WTC11 (cell line): ENCODE measurements at regions of chr7 and their contacts with region 1.

Region 1: DNA sequence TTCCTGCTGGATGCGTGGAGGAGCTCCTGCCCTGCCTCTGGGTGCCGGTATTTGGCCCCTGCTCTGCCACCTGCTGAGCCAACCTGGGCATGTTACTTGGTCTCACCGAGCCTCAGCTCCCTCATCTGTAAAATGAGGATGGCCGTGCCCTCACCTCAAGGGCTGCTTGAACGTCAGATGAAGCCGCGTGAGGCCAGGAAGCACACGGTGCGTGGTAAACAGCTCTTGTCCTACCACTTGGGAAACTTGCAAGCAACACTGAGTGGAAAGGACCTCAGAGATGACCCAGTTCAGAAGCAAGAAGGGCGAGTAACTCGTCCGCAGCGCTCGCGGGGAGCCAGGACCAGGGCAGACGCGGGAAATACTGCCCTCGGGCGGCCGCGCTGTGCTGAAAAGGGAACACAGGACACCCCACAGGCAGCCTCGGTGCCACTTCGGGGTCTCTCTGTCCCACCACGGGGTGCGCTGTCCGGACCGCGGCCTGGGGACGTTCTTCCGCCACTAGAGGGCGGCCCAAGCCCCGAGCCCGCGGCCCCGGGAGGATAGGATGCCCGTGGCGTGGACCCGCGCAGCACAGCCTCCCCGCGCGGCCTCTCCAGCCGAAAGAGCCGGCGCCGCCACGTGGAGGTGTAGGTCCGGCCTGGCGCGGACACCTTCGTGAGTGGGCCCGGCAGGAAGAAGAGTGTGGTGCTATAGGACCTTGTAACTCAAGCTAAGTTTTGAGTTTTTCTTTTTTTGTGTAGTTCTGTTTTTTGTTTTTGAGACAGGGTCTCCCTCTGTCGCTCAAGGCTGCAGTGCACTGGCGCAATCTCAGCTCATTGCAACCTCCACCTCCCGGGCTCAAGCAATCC is 94.1 kb downstream of the PRKAG2 start:
- DNase-seq: peak; percentile 89
- ATAC-seq: peak; percentile 97
- H3K4me3 Mint-ChIP-seq: peak overlapping the region; percentile 61
- H3K27ac Mint-ChIP-seq: no peak overlapping the region
- H3K4me1 Mint-ChIP-seq: no peaks in the 10 kb centered on the region
- H3K27me3 Mint-ChIP-seq: peaks cover 19% of the 10 kb centered on the region
- CTCF ChIP-seq: peak; percentile 85

Region 2: DNA sequence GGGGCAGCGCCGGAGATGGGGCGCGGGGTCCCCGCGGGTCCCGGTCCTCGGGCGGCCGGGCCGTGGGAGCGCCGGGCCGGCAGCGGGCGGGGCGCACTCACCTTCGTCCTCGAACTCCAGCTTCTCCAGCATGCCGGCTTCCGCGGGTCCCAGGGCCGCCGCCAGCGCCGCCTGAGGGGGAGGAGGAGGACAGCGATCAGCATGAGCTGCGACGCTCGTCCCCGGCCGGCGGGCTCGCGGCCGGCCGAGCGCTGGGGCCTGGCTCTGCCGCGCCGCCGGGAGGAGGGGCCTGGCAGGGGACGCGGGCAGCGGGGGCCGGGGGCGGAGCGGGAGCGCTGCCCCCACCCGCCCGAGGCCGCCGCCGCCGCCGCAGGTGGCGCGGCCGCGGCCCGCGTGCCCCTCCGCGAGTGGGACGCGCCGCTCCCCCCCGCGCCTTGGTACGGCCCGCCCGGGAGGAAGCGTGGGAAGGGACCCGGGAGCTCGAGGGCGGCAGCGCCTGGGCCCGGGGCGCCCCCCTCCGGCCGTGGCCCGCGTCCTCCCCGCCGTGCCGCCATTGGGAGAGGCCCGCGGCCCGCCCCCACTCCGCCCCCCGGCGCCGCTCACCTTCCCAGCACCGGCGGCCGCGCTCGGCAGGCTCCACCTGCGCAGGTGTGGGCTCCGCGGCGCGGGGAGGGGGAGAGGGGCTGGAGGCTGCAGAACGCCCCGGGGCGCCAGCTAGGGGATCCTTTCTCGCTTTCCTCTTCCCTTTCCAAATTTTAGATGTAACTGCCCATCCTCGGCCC is 150.7 kb before region 1 on chr7:
- CTCF ChIA-PET with region 1: interaction called, 20 read pairs
- POLR2A ChIA-PET with region 1: no interaction called
- DNase-seq: peak; percentile 82
- ATAC-seq: peak; percentile 79
- H3K4me3 Mint-ChIP-seq: peak overlapping the region; percentile 85
- H3K27ac Mint-ChIP-seq: peak overlapping the region; percentile 82
- H3K4me1 Mint-ChIP-seq: peaks cover 38% of the 10 kb centered on the region
- H3K27me3 Mint-ChIP-seq: peaks cover 33% of the 10 kb centered on the region
- CTCF ChIP-seq: no peak

Region 3: GRCh38 chr7:151658778-151659177 is 124.0 kb before region 1 on chr7:
- CTCF ChIA-PET with region 1: no interaction called
- POLR2A ChIA-PET with region 1: no interaction called
- DNase-seq: no peak
- ATAC-seq: no peak
- H3K4me3 Mint-ChIP-seq: no peak overlapping the region
- H3K27ac Mint-ChIP-seq: no peak overlapping the region
- H3K4me1 Mint-ChIP-seq: no peaks in the 10 kb centered on the region
- H3K27me3 Mint-ChIP-seq: no peaks in the 10 kb centered on the region; the same call in 1 of the 2 replicates
- CTCF ChIP-seq: no peak

Region 4: GRCh38 chr7:151759591-151760042 is 23.2 kb before region 1 on chr7:
- CTCF ChIA-PET with region 1: interaction called, 35 read pairs
- POLR2A ChIA-PET with region 1: no interaction called
- DNase-seq: peak; percentile 78
- ATAC-seq: peak; percentile 79
- H3K4me3 Mint-ChIP-seq: no peak overlapping the region
- H3K27ac Mint-ChIP-seq: no peak overlapping the region
- H3K4me1 Mint-ChIP-seq: peaks cover 35% of the 10 kb centered on the region
- H3K27me3 Mint-ChIP-seq: peaks cover 8% of the 10 kb centered on the region
- CTCF ChIP-seq: peak; percentile 88

Region 5: GRCh38 chr7:151814400-151815009 is 31.7 kb after region 1 on chr7:
- CTCF ChIA-PET with region 1: interaction called, 25 read pairs
- POLR2A ChIA-PET with region 1: interaction called, 6 read pairs
- DNase-seq: peak; percentile 31
- ATAC-seq: peak; percentile 71
- H3K4me3 Mint-ChIP-seq: peak overlapping the region; percentile 37; the same call in 1 of the 2 replicates
- H3K27ac Mint-ChIP-seq: no peak overlapping the region
- H3K4me1 Mint-ChIP-seq: peaks cover 28% of the 10 kb centered on the region
- H3K27me3 Mint-ChIP-seq: peaks cover 30% of the 10 kb centered on the region
- CTCF ChIP-seq: no peak

Region 6: DNA sequence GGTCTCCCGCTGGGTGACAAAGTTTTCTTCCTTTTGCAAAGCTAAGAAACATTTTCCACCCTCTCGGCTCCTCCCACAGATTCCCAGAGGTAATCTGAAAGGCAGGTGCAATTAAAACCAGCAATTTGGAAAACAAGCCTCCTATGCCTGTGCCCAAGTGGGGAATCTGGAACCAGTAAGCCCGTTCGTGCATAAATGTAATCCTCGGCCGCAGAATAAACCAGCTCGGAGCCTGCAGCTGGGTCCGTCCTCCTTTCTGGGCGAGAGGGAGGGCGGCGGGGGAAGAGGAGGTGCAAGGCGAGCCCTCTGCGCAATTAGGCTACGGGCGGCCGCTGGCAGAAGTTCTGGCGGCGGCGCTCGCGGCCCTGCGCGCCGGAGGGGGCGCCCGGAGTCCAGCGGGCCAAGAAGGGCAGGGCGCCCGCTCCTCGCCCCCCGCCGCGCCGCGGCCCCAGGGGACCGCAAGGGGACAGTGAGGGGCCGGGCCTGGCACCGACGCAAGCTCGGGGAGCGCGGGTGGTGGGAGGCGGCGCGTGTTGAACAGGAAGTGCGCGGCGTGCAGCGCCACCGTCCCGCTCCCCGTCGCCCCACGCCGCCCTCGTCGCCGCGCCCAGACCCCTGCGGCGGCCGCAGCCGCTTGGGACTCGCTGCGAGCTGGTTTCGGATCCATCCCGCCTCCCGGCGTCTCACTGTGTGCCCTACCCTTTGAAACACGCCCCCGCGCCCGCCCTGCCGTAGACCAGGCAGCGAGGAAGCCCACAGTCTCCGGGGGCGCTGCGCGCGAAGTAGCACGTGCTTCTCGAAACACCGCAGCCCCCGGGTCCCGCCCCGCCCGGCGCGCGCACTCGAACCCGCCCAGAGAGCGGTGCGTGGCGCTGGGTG is 94.3 kb after region 1 on chr7 and contains the start of gene PRKAG2:
- CTCF ChIA-PET with region 1: interaction called, 19 read pairs
- POLR2A ChIA-PET with region 1: no interaction called
- DNase-seq: peak; percentile 50
- ATAC-seq: peak; percentile 18
- H3K4me3 Mint-ChIP-seq: peak within 1 kb of the TSS; percentile 86
- H3K27ac Mint-ChIP-seq: no peak within 1 kb of the TSS
- H3K4me1 Mint-ChIP-seq: peaks cover 8% of the 10 kb centered on the region
- H3K27me3 Mint-ChIP-seq: peaks cover 42% of the 10 kb centered on the region
- CTCF ChIP-seq: no peak
- total RNA-seq, gene PRKAG2: 14.7 to 20.3 TPM (median 17.0 TPM) in 3 replicates